ENCODE measurements at regions of chr1 and their contacts with region 1.

Region 1: DNA sequence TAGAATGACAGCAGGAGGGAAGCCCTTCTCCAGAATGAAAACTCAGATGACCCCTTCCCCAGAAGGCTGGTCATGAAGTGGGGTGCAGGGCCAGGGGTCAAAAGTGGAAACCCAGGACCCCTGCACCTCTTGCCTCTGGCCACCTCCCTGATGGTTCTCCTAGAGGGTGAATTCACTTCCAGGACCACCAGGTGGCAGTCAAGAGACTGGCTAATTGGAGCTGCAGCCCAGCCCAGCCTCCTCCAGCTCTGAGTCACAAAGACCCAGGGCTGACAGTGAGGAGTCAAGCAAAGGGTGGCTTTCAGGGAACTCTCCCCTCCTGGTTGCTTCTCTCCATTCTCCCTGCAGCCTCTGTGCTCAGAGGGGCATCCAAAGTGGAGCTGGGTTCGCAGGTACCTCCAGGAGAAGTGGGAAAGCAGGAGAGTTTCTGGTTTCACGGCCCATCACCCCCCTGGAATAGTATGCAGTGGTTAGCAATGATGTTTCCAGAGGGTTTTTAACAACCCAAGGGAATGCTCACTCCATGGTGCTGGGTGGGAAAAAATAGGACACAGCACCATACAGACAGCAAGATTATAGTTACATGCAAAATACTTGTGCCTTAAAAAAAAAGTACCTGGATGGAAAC is 6.1 kb upstream of the EPHB2 start:
- H3K4me3 Mint-ChIP-seq: no peak overlapping the region
- H3K27ac Mint-ChIP-seq: no peak overlapping the region
- H3K4me1 Mint-ChIP-seq: peaks cover 45% of the 10 kb centered on the region
- H3K27me3 Mint-ChIP-seq: peaks cover 15% of the 10 kb centered on the region

Region 2: DNA sequence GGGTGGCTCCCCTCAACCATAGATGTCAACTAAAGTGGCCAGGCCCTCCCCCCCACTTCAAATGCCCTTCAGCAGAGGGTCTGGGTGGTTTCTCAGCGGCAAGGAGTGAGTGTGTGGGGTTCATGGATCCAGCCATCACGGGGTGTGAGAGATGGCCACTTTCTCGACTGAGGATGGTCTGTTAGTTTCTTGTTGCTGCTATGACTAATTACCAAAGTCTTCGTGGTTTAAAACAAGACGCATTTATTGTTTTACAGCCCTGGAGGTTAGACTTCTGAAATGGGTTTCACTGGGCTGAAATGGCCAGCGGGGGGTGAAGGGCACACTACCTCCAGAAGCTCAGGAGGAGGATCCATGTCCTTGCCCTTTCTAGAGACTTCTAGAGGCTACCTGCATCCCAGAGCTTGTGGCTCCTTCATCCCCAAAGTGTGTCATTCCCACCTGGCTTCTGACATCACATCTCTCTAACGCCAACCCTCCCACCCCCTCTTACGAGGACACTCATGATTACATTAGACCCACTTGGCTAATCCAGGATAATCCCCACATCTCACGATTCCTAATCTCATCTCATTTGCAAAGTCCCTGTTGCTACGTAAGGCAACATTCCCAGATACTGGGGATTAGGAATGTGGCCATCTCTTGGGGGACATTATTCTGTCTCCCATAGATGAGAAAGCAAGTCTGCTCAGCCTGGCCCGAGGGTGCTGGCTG is 59.1 kb after region 1 on chr1:
- intact Hi-C with region 1: no loop called
- H3K4me3 Mint-ChIP-seq: no peak overlapping the region
- H3K27ac Mint-ChIP-seq: no peak overlapping the region
- H3K4me1 Mint-ChIP-seq: no peaks in the 10 kb centered on the region
- H3K27me3 Mint-ChIP-seq: peaks cover 11% of the 10 kb centered on the region

Region 3: DNA sequence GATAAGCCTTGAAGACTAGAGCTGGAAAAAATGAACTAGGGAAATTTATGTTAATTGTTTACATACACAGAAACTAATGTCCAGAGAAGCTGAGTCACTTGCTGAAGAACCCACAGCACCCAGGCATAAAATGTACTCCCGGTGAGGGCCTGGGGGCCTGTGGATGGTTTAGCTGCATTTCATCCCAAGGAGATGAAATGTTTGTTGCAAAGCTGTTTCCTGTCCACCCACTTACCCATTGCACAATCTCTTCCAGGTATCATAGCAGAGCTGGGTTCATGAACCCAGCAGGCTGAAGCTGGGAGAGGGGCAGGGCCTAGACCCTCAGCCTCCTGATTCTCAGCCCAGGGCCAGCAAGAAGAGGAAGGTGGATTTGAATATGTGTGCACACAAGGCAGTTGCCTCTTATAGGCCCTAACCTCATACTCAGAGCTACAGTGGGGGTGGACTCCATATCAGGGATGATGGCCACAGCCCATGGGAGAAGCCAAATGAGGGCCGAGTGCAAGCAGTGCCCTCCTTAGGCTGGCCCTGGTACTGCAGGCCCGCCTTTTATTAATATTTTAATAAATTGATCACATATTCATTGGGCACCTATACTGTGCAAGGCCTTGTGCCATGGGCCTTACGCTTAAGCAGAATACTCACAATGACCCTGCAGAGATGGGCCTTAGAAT is 157.3 kb after region 1 on chr1:
- intact Hi-C with region 1: loop called (anchors 5 kb)
- H3K4me3 Mint-ChIP-seq: no peak overlapping the region
- H3K27ac Mint-ChIP-seq: no peak overlapping the region
- H3K4me1 Mint-ChIP-seq: peaks cover 45% of the 10 kb centered on the region
- H3K27me3 Mint-ChIP-seq: peaks cover 18% of the 10 kb centered on the region